ENCODE measurements at regions of chr12 and their contacts with region 1.

Region 1: DNA sequence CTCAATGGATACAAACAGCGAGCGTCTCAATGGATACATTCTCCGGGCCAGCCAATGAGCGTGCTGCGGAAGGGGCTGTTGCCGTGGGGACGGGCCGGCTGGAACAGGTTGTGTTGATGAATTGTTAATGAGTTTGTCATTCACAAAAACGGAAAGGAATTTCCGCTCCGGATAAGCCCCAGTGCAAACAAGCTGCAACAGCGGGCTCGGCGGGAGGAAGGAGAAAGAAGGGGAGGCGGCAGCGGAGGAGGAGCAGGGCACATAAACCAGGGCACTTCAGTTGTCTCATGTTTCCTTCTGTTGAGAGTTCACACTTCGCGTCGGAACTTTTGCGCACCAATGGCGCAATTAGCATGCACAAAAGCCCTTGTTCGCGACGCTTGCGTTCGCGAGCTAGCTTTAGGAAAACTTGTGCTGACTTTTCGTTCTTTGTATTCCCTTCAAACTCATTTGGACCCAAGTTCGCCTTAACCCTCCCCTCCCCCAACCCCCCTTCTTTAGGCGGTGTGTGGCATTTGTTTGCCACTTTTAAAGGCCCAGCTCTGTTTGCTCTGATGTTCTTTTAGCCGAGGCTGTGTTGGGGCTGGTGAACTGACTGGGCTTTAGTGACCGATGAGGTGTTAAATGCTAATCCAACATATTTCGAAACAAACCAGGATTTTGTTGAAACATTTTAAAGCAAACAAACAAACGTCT is at the start of gene DUSP6:
- DNase-seq: peak; percentile 98
- H3K4me3 Mint-ChIP-seq: peak within 1 kb of the TSS; percentile 98
- H3K27ac Mint-ChIP-seq: peak within 1 kb of the TSS; percentile 96
- H3K4me1 Mint-ChIP-seq: peaks cover 45% of the 10 kb centered on the region
- H3K27me3 Mint-ChIP-seq: no peaks in the 10 kb centered on the region
- total RNA-seq, gene DUSP6: 170 to 171 TPM

Region 2: GRCh38 chr12:89040146-89040964 is 312.3 kb before region 1 on chr12:
- CTCF ChIA-PET with region 1: interaction called, 18 read pairs
- POLR2A ChIA-PET with region 1: interaction called, 83 read pairs
- DNase-seq: peak; percentile 90
- H3K4me3 Mint-ChIP-seq: peak overlapping the region; percentile 35
- H3K27ac Mint-ChIP-seq: peak overlapping the region; percentile 96
- H3K4me1 Mint-ChIP-seq: peaks cover 58% of the 10 kb centered on the region
- H3K27me3 Mint-ChIP-seq: no peaks in the 10 kb centered on the region

Region 3: GRCh38 chr12:89162704-89163261 is 189.9 kb before region 1 on chr12:
- CTCF ChIA-PET with region 1: no interaction called
- POLR2A ChIA-PET with region 1: interaction called, 38 read pairs
- DNase-seq: peak; percentile 70
- H3K4me3 Mint-ChIP-seq: no peak overlapping the region
- H3K27ac Mint-ChIP-seq: no peak overlapping the region
- H3K4me1 Mint-ChIP-seq: peaks cover 25% of the 10 kb centered on the region
- H3K27me3 Mint-ChIP-seq: no peaks in the 10 kb centered on the region

Region 4: GRCh38 chr12:89244536-89244935 is 108.1 kb before region 1 on chr12:
- CTCF ChIA-PET with region 1: interaction called, 25 read pairs
- POLR2A ChIA-PET with region 1: interaction called, 293 read pairs
- DNase-seq: peak; percentile 48
- H3K4me3 Mint-ChIP-seq: peak overlapping the region; percentile 55
- H3K27ac Mint-ChIP-seq: peak overlapping the region; percentile 96
- H3K4me1 Mint-ChIP-seq: peaks cover 56% of the 10 kb centered on the region
- H3K27me3 Mint-ChIP-seq: no peaks in the 10 kb centered on the region

Region 5: DNA sequence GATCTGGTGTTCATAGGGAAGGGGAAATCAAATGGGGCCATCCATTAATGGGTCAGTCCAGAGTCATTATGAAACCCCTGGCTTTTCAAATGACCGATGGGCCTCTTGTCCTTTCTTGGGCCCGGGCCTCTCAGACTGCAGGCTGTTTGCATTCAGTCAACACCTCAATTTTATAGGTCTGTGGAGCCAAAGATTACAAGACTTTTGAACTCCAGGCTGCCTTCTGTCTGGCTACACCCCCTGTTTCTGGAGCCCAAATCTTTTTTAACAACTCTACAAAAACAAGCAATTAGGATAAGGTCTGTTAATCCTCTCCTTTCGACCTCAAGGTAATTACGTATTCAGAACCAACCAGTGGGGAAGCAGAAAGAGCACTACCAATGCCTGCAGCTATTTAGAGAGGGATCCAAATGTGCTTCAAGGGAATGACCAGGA is 35.9 kb before region 1 on chr12:
- CTCF ChIA-PET with region 1: no interaction called
- POLR2A ChIA-PET with region 1: no interaction called
- DNase-seq: no peak
- H3K4me3 Mint-ChIP-seq: no peak overlapping the region
- H3K27ac Mint-ChIP-seq: no peak overlapping the region
- H3K4me1 Mint-ChIP-seq: peaks cover 12% of the 10 kb centered on the region
- H3K27me3 Mint-ChIP-seq: no peaks in the 10 kb centered on the region

Region 6: DNA sequence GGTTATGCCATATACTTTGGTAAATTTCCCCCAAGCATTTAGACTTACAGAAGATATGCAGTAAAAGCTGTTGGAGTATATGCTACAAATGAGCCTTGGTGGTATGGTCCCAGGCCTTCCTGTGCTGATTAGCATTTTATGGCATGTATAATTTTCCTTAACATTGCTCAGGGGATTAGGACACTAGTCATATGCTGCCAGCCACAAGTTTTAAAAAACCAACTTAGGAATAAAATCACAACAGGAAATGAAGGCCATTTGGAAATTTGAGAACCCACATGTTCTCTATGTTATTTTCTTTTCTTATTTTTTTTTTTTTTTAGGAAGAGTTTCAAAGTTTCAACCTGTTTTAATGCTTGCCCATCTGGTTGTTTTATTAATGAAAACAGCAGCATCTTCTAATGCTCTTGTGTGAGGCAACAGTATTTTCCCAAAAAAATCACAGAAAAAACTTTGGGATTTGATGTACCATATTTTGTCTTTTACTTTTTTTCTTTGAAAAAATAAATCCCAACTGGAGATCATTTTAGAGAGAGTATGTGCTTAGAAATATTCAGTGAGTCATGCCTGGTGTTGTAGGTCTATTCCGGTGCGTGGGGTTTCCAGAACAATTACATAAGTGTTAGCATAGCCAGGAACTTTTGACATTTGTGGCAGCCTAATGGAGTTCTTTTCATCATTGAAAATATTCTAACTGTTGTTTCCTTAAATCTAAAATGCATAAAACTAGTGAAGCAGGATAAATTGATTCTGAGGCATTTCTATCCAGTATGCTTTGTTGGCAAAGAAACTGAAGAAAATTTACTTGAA is 21.3 kb after region 1 on chr12:
- CTCF ChIA-PET with region 1: interaction called, 6 read pairs
- POLR2A ChIA-PET with region 1: interaction called, 37 read pairs
- DNase-seq: no peak
- H3K4me3 Mint-ChIP-seq: no peak overlapping the region
- H3K27ac Mint-ChIP-seq: no peak overlapping the region
- H3K4me1 Mint-ChIP-seq: peaks cover 54% of the 10 kb centered on the region
- H3K27me3 Mint-ChIP-seq: no peaks in the 10 kb centered on the region

Region 7: GRCh38 chr12:89470741-89471509 is 118.3 kb after region 1 on chr12:
- CTCF ChIA-PET with region 1: interaction called, 8 read pairs
- POLR2A ChIA-PET with region 1: interaction called, 98 read pairs
- DNase-seq: no peak
- H3K4me3 Mint-ChIP-seq: no peak overlapping the region
- H3K27ac Mint-ChIP-seq: peak overlapping the region; percentile 84
- H3K4me1 Mint-ChIP-seq: peaks cover 81% of the 10 kb centered on the region
- H3K27me3 Mint-ChIP-seq: no peaks in the 10 kb centered on the region